PC-9 (cell line): ENCODE measurements at regions of chr1 and their contacts with region 1.

Region 1: GRCh38 chr1:205273551-205273982 is 45.8 kb downstream of the TMCC2 start:
- DNase-seq: peak; percentile 67 to 83
- H3K4me3 ChIP-seq: no peak overlapping the region
- H3K27ac ChIP-seq: no peak overlapping the region
- H3K4me1 ChIP-seq: peaks cover 5% of the 10 kb centered on the region
- H3K27me3 ChIP-seq: no peaks in the 10 kb centered on the region
- CTCF ChIP-seq: peak; percentile 97

Region 2: GRCh38 chr1:205172729-205173366 is 100.7 kb before region 1 on chr1:
- CTCF ChIA-PET with region 1: interaction called, 10 read pairs
- POLR2A ChIA-PET with region 1: no interaction called
- intact Hi-C with region 1: no loop called
- DNase-seq: peak; percentile 20 to 89
- H3K4me3 ChIP-seq: no peak overlapping the region
- H3K27ac ChIP-seq: peak overlapping the region; percentile 60
- H3K4me1 ChIP-seq: peaks cover 36% of the 10 kb centered on the region
- H3K27me3 ChIP-seq: no peaks in the 10 kb centered on the region
- CTCF ChIP-seq: no peak

Region 3: GRCh38 chr1:205211169-205211838 is 62.3 kb before region 1 on chr1 and contains the start of gene DSTYK:
- CTCF ChIA-PET with region 1: no interaction called
- POLR2A ChIA-PET with region 1: no interaction called
- intact Hi-C with region 1: no loop called
- DNase-seq: peak; percentile 84 to 92
- H3K4me3 ChIP-seq: peak within 1 kb of the TSS; percentile 85
- H3K27ac ChIP-seq: peak within 1 kb of the TSS; percentile 46; the same call in 1 of the 2 replicates
- H3K4me1 ChIP-seq: peaks cover 10% of the 10 kb centered on the region
- H3K27me3 ChIP-seq: no peaks in the 10 kb centered on the region
- CTCF ChIP-seq: no peak
- total RNA-seq, gene DSTYK: 8.1 and 10.5 TPM in 2 replicates

Region 4: DNA sequence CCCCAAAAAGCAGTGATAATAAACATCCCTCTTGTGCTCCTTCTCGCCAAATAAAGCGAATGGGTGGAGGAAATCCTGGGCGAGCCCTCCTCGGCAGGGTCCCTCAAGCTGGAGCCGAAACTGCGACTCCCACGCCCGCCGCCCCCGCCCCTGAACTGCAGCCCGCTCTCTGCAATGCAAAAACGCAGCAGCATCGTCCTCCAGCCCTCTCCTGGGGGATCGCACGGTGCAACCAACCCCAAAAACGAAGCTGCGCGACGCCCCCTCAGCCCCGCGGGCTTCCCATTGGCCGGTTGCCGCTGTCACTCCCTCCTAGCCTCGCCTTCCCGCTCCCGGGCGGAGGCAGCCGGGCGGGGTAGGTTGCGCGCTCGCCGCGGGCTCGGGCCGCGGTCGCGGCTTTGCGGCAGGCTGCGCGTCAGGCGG is 46.0 kb before region 1 on chr1 and contains the start of gene TMCC2:
- CTCF ChIA-PET with region 1: interaction called, 15 read pairs
- POLR2A ChIA-PET with region 1: no interaction called
- intact Hi-C with region 1: no loop called
- DNase-seq: peak; percentile 52 to 82
- H3K4me3 ChIP-seq: peak within 1 kb of the TSS; percentile 58
- H3K27ac ChIP-seq: no peak within 1 kb of the TSS
- H3K4me1 ChIP-seq: 0 out of 2 replicates have a peak, but pooled peaks cover 8% of the 10 kb centered on the region
- H3K27me3 ChIP-seq: peaks cover 12% of the 10 kb centered on the region; the same call in 1 of the 2 replicates
- CTCF ChIP-seq: no peak
- total RNA-seq, gene TMCC2: 0.79 and 0.80 TPM in 2 replicates

Region 5: DNA sequence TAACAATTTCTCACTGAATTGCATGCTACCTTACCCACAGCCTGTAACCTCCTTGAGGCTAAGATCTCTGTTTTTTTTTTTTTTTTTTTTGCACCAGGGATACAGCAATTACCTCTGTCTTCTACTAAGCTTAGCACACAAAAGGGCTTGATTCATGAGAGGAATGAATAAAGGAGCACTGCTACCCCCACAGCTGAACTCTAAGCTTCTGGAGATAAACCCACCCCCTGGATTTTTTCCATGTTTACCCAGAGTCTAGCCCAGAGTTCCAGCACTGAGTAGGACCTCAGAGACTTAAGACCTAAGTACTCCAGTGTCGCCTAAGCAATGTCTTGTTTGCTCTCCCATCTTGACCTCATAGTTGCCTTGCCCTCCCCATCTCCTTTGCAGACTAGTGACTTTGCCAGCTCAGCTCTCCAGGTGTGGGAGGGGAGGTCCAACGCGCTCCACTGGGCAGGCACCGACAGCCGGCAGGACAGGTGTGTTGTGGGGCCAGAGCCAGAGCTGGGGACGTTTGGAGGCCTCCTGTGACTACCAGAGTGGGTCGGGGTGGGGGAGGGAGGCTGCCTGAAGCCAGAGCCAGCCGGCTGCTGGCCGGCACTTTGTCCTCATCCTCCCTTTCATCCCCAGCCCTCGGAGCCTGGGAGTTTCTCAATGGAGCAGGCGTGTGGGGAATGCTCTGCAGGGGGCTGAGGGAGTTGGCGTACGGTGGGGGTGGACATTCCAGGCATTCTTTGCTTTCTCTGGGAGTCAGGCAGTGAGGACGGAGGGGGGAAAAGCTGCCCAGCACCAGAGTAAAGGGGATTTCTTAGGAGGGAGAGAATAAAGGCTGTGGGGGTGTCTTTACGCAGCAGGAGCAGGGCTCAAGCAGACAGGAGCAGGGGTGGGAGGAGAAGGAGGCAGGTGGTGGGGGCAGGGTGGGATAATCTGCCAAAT is 27.6 kb after region 1 on chr1:
- CTCF ChIA-PET with region 1: interaction called, 4 read pairs
- POLR2A ChIA-PET with region 1: no interaction called
- intact Hi-C with region 1: loop called (anchors 1 kb)
- DNase-seq: peak; percentile 78 to 85
- H3K4me3 ChIP-seq: peak overlapping the region; percentile 15; the same call in 1 of the 2 replicates
- H3K27ac ChIP-seq: peak overlapping the region; percentile 68
- H3K4me1 ChIP-seq: peaks cover 53% of the 10 kb centered on the region
- H3K27me3 ChIP-seq: no peaks in the 10 kb centered on the region
- CTCF ChIP-seq: no peak

Region 6: GRCh38 chr1:205321164-205321958 is 47.8 kb after region 1 on chr1 and contains the start of gene NUAK2:
- CTCF ChIA-PET with region 1: interaction called, 69 read pairs
- POLR2A ChIA-PET with region 1: no interaction called
- intact Hi-C with region 1: loop called (anchors 1 kb)
- DNase-seq: peak; percentile 71 to 91
- H3K4me3 ChIP-seq: peak within 1 kb of the TSS; percentile 94
- H3K27ac ChIP-seq: no peak within 1 kb of the TSS
- H3K4me1 ChIP-seq: peaks cover 56% of the 10 kb centered on the region
- H3K27me3 ChIP-seq: 0 out of 2 replicates have a peak, but pooled peaks cover 2% of the 10 kb centered on the region
- CTCF ChIP-seq: peak; percentile 50; the same call in 1 of the 2 replicates
- total RNA-seq, gene NUAK2: 3.8 and 3.9 TPM in 2 replicates

Region 7: GRCh38 chr1:205359771-205360565 is 86.4 kb after region 1 on chr1:
- CTCF ChIA-PET with region 1: no interaction called
- POLR2A ChIA-PET with region 1: no interaction called
- intact Hi-C with region 1: no loop called
- DNase-seq: no peak
- H3K4me3 ChIP-seq: no peak overlapping the region
- H3K27ac ChIP-seq: no peak overlapping the region
- H3K4me1 ChIP-seq: 0 out of 2 replicates have a peak, but pooled peaks cover 2% of the 10 kb centered on the region
- H3K27me3 ChIP-seq: peaks cover 64% of the 10 kb centered on the region
- CTCF ChIP-seq: no peak

Region 8: GRCh38 chr1:205396967-205397616 is 123.5 kb after region 1 on chr1:
- CTCF ChIA-PET with region 1: no interaction called
- POLR2A ChIA-PET with region 1: no interaction called
- intact Hi-C with region 1: loop called (anchors 1 kb)
- DNase-seq: peak; percentile 30 to 51
- H3K4me3 ChIP-seq: no peak overlapping the region
- H3K27ac ChIP-seq: no peak overlapping the region
- H3K4me1 ChIP-seq: no peaks in the 10 kb centered on the region
- H3K27me3 ChIP-seq: no peaks in the 10 kb centered on the region
- CTCF ChIP-seq: peak; percentile 89

Region 9: GRCh38 chr1:205523891-205524793 is 250.6 kb after region 1 on chr1:
- CTCF ChIA-PET with region 1: interaction called, 3 read pairs
- POLR2A ChIA-PET with region 1: no interaction called
- intact Hi-C with region 1: loop called (anchors 1 kb)
- DNase-seq: peak; percentile 61 to 72
- H3K4me3 ChIP-seq: no peak overlapping the region
- H3K27ac ChIP-seq: no peak overlapping the region
- H3K4me1 ChIP-seq: no peaks in the 10 kb centered on the region
- H3K27me3 ChIP-seq: no peaks in the 10 kb centered on the region
- CTCF ChIP-seq: peak; percentile 90